CD8-positive, alpha-beta T cell (primary cell): ENCODE measurements at regions of chr4 and their contacts with region 1.

Region 1: GRCh38 chr4:67522851-67523671 is 22.2 kb downstream of the CENPC start:
- DNase-seq: peak in 2 of 9 experiments; percentile 19 to 47
- ATAC-seq: peak; percentile 72
- H3K4me3 ChIP-seq: no peak overlapping the region
- H3K4me3 Mint-ChIP-seq: no peak overlapping the region
- H3K27ac ChIP-seq: no peak overlapping the region
- H3K27ac Mint-ChIP-seq: peak overlapping the region; percentile 37
- H3K4me1 ChIP-seq: peaks cover 6% of the 10 kb centered on the region
- H3K4me1 Mint-ChIP-seq: peaks cover 72% of the 10 kb centered on the region
- H3K27me3 ChIP-seq: no peaks in the 10 kb centered on the region
- H3K27me3 Mint-ChIP-seq: no peaks in the 10 kb centered on the region
- CTCF ChIP-seq: no peak

Region 2: GRCh38 chr4:67539830-67540229 is 16.8 kb after region 1 on chr4:
- CTCF ChIA-PET with region 1: no interaction called
- POLR2A ChIA-PET with region 1: interaction called, 3 read pairs
- intact Hi-C with region 1: loop called in 1 of 2 experiments (anchors 1 kb)
- DNase-seq: no peak
- ATAC-seq: no peak
- H3K4me3 ChIP-seq: no peak overlapping the region
- H3K4me3 Mint-ChIP-seq: no peak overlapping the region
- H3K27ac ChIP-seq: no peak overlapping the region
- H3K27ac Mint-ChIP-seq: no peak overlapping the region
- H3K4me1 ChIP-seq: peaks cover 3% of the 10 kb centered on the region
- H3K4me1 Mint-ChIP-seq: peaks cover 52% of the 10 kb centered on the region
- H3K27me3 ChIP-seq: no peaks in the 10 kb centered on the region
- H3K27me3 Mint-ChIP-seq: no peaks in the 10 kb centered on the region
- CTCF ChIP-seq: no peak